ENCODE measurements at regions of chr9 and their contacts with region 1.

Region 1: GRCh38 chr9:97890038-97890437 is 32.3 kb downstream of the TRMO start:
- DNase-seq: peak; percentile 69 to 83 (median 80)
- ATAC-seq: peak; percentile 92
- H3K4me3 ChIP-seq: no peak overlapping the region
- H3K27ac ChIP-seq: no peak overlapping the region
- H3K4me1 ChIP-seq: no peaks in the 10 kb centered on the region
- H3K27me3 ChIP-seq: peaks cover 15 to 27% of the 10 kb centered on the region in 2 experiments; a peak in 4 of 5 replicates
- CTCF ChIP-seq: peak; percentile 83 to 96 (median 85)
- EP300 ChIP-seq: no peak
- POLR2A ChIP-seq: no peak
- RAD21 ChIP-seq: peak in 1 of 2 experiments; percentile 62; a peak in 2 of 4 replicates

Region 2: DNA sequence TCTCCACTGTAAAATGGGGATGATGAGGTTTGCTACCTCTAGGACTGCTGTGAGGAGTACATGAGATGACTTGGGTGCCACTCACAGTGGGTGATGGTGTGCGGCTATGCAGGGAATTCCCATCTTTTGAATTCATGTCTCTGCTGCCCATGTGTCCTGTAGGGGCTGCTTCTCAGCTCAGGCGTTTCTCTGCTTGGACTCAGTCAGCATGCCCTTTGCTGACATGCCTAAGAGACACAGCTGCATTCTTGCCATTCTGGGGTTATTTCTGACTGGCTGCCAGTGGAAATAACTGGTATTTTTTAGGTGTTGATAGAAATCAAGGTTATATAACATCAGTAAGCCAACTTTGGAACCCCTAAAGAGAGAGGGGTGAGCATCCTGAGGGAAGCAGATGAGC is 168.6 kb before region 1 on chr9:
- CTCF ChIA-PET with region 1: no interaction called
- POLR2A ChIA-PET with region 1: no interaction called
- in situ Hi-C with region 1: loop called (anchors 10 kb)
- intact Hi-C with region 1: no loop called
- DNase-seq: no peak
- ATAC-seq: no peak
- H3K4me3 ChIP-seq: no peak overlapping the region
- H3K27ac ChIP-seq: no peak overlapping the region
- H3K4me1 ChIP-seq: no peaks in the 10 kb centered on the region
- H3K27me3 ChIP-seq: peaks cover 18 to 50% of the 10 kb centered on the region in 2 experiments
- CTCF ChIP-seq: no peak
- EP300 ChIP-seq: no peak
- POLR2A ChIP-seq: no peak
- RAD21 ChIP-seq: no peak